ENCODE measurements at regions of chr6 and their contacts with region 1.

Region 1: DNA sequence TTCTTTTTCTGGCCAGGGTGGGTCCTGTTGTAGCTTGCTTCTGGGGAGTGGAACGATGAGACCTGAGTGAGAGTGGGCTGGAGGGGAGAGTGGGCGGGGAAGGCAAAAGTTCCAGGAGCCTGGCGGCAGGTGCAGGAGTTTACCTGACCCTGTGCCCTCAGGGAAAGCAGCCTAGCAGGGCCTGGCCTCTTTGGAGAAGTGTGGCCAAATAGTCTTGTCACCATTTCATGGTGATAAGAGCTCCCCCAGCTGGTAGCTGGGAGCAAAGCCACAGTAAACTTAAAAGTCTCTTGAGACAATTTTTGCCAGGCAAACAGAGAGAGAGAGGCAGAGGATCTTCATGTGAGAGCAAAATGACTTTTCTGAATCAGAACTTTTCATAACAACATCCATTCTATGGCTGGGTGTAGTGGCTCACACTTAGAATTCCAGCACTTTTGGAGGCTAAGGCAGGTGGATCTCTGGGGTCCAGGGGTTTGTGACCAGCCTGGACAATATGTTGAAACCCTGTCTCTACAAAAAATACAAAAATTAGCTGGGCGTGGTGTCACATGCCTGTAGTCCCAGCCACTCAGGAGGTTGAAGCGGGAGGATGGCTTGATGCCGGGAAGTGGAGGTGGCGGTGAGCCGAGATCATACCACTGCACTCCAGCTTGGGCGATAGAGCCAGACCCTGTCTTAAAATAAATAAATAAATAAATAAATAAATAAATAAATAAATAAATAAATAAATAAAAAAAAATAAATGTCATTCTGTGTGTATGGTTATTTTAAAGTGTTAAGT is 161.8 kb upstream of the SCGN start:
- DNase-seq: peak; percentile 82
- H3K4me3 Mint-ChIP-seq: no peak overlapping the region
- H3K27ac Mint-ChIP-seq: no peak overlapping the region
- H3K4me1 Mint-ChIP-seq: peaks cover 6% of the 10 kb centered on the region
- H3K27me3 Mint-ChIP-seq: no peaks in the 10 kb centered on the region

Region 2: GRCh38 chr6:25263657-25264056 is 226.6 kb before region 1 on chr6:
- CTCF ChIA-PET with region 1: interaction called, 107 read pairs
- intact Hi-C with region 1: loop called (anchors 1 kb)
- DNase-seq: no peak
- H3K4me3 Mint-ChIP-seq: no peak overlapping the region
- H3K27ac Mint-ChIP-seq: no peak overlapping the region
- H3K4me1 Mint-ChIP-seq: peaks cover 2% of the 10 kb centered on the region
- H3K27me3 Mint-ChIP-seq: no peaks in the 10 kb centered on the region

Region 3: GRCh38 chr6:25278914-25279747 is 211.1 kb before region 1 on chr6 and contains the start of gene CARMIL1:
- CTCF ChIA-PET with region 1: interaction called, 93 read pairs
- intact Hi-C with region 1: loop called (anchors 1 kb)
- DNase-seq: peak; percentile 76
- H3K4me3 Mint-ChIP-seq: peak within 1 kb of the TSS; percentile 83
- H3K27ac Mint-ChIP-seq: peak within 1 kb of the TSS; percentile 60
- H3K4me1 Mint-ChIP-seq: peaks cover 29% of the 10 kb centered on the region
- H3K27me3 Mint-ChIP-seq: no peaks in the 10 kb centered on the region
- total RNA-seq, gene CARMIL1: 3.9 to 4.0 TPM

Region 4: DNA sequence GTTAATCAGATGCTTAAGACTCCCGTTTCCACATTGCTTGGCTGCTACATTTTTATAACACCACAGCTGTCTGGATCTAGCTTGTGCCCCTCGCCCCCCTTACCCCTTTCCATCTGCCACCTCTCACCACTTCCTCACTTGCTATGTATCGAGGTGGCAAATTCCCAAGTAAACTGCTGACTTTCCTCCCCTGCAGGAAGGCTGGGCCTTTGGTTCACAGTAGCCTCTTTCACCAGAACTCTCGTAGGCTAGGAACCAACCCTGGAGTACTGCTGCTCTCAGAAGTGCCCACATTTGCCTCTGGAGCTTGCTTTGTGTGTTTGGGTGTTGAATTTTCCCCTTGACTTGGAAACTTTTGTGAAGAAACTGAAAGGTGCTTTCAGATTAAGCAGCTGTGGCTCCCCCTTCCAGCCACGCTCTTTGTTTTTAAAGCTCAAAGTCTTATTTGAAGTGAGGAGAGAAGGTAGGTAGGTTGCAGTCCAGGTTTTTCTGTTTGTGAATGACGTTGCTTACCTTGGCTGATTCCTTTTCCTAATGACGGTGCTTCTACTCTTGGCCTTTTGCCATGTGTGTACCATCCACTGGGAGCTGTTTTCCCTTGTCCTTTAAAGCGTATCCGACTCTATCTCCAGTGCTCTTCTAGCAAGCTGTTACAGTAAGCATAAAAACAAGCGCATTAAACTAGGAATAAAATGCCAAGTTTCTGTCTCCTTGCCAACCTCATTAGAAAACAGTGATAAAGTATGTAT is 120.6 kb before region 1 on chr6:
- CTCF ChIA-PET with region 1: interaction called, 13 read pairs
- intact Hi-C with region 1: no loop called
- DNase-seq: peak; percentile 57
- H3K4me3 Mint-ChIP-seq: peak overlapping the region; percentile 51
- H3K27ac Mint-ChIP-seq: peak overlapping the region; percentile 74
- H3K4me1 Mint-ChIP-seq: peaks cover 75% of the 10 kb centered on the region
- H3K27me3 Mint-ChIP-seq: no peaks in the 10 kb centered on the region

Region 5: DNA sequence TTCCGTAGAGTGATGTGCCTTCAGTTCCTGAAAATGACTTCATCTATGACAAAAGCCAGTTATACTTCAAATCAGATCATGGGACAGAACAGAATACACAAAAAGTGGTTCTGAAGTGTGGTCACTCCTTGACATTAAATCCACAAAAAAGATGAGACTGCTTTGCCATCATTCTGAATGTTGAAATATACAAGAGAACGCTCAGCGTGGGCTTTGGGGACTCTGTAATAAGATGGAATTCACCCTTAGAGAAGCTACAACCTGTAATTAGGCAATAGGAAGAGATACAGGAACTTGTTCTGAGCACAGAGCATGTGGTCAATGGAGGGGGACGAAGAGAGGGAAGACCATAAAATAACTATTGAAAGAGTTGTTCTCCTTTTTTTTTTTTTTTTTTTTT is 26.8 kb before region 1 on chr6:
- CTCF ChIA-PET with region 1: no interaction called
- intact Hi-C with region 1: no loop called
- DNase-seq: no peak
- H3K4me3 Mint-ChIP-seq: no peak overlapping the region
- H3K27ac Mint-ChIP-seq: no peak overlapping the region
- H3K4me1 Mint-ChIP-seq: no peaks in the 10 kb centered on the region
- H3K27me3 Mint-ChIP-seq: no peaks in the 10 kb centered on the region

Region 6: DNA sequence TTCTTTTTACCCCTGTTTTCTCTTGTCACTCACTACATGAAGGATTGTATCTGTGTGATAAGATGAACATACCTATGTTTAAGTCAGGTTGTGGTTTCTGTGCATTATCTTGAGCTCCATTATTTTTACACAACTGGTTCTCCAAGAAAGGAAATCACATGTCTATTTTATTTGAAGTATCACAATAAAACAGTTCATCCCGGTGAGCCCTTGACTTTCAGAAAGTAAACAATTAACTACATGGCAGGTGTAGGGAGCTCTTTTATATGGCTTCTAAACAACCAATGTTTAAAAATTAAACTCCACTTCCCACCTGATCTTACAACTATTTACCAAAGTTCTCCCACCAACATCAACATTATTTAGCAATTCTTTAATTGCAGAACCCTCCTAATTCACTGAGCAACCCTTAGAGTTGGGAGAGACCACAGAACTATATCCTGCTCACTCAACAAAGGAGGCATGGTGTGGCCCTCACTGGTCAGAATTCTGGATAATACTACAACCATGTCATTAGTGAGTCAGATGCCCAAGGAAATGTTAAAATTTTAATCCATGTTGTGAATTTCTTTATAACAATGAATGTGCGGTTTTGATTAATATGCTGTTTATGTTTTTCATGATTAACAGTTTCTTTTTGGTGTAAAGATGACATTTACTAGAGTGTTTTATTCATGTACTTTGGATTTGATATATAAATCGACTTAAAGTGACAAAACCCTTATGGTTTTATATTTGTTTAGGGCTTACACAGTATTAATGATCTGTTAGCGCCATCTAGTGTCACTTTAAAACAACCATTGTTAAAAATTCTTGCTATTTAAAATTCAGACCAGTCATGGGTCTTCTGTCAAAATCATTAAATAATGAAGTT is 111.8 kb after region 1 on chr6:
- CTCF ChIA-PET with region 1: interaction called, 4 read pairs
- intact Hi-C with region 1: loop called (anchors 1 kb)
- DNase-seq: no peak
- H3K4me3 Mint-ChIP-seq: no peak overlapping the region
- H3K27ac Mint-ChIP-seq: no peak overlapping the region
- H3K4me1 Mint-ChIP-seq: peaks cover 6% of the 10 kb centered on the region
- H3K27me3 Mint-ChIP-seq: no peaks in the 10 kb centered on the region

Measured in activated naive CD4-positive, alpha-beta T cell treated with anti-CD3 and anti-CD28 coated beads for 36 hours (primary cell).